ENCODE measurements at regions of chr7 and their contacts with region 1.

Region 1: GRCh38 chr7:876167-876967 is at the start of gene GET4:
- DNase-seq: peak; percentile 98 to 99 (median 98)
- ATAC-seq: peak; percentile 83 to 86
- H3K4me3 ChIP-seq: peak within 1 kb of the TSS; percentile 87
- H3K27ac ChIP-seq: peak within 1 kb of the TSS; percentile 81
- H3K4me1 ChIP-seq: peaks cover 7% of the 10 kb centered on the region
- H3K27me3 ChIP-seq: no peaks in the 10 kb centered on the region
- total RNA-seq, gene GET4: 20.1 to 23.6 (median 22.2) TPM

Region 2: GRCh38 chr7:322111-322671 is 554.2 kb before region 1 on chr7:
- intact Hi-C with region 1: loop called in 1 of 4 experiments (anchors 10 kb)
- DNase-seq: peak; percentile 60 to 89 (median 88)
- ATAC-seq: peak; percentile 82 to 88
- H3K4me3 ChIP-seq: no peak overlapping the region
- H3K27ac ChIP-seq: no peak overlapping the region
- H3K4me1 ChIP-seq: no peaks in the 10 kb centered on the region
- H3K27me3 ChIP-seq: no peaks in the 10 kb centered on the region

Region 3: DNA sequence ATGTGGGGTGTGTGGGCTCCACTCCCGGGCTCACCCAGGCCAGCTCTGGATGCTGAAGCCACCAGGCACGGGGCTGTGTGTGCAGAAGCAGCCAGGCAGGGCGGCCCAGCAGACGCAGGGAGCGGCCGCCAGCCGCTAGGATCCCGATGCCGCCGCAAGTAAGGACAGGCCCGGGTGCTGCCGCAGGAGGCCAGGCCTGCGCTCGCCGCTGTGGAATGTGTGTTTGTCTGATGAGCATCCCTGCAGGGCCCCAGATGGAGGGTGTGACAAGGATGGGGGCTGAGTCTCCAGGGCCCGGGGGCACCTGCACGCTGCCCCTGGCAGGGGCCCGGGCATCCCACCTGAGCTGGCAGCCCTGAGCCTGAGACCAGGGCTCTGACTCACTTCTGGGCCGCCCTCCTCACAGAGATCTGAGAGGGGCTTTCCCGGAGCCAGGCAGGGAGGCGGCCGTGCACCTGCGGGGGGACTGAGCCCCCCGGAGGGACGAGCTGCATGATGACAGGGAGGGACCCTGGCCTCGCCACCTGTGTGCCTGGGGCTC is 484.9 kb before region 1 on chr7:
- intact Hi-C with region 1: no loop called
- DNase-seq: peak in 1 of 3 donors; percentile 48
- ATAC-seq: peak; percentile 14 to 35
- H3K4me3 ChIP-seq: no peak overlapping the region
- H3K27ac ChIP-seq: no peak overlapping the region
- H3K4me1 ChIP-seq: no peaks in the 10 kb centered on the region
- H3K27me3 ChIP-seq: no peaks in the 10 kb centered on the region

Region 4: DNA sequence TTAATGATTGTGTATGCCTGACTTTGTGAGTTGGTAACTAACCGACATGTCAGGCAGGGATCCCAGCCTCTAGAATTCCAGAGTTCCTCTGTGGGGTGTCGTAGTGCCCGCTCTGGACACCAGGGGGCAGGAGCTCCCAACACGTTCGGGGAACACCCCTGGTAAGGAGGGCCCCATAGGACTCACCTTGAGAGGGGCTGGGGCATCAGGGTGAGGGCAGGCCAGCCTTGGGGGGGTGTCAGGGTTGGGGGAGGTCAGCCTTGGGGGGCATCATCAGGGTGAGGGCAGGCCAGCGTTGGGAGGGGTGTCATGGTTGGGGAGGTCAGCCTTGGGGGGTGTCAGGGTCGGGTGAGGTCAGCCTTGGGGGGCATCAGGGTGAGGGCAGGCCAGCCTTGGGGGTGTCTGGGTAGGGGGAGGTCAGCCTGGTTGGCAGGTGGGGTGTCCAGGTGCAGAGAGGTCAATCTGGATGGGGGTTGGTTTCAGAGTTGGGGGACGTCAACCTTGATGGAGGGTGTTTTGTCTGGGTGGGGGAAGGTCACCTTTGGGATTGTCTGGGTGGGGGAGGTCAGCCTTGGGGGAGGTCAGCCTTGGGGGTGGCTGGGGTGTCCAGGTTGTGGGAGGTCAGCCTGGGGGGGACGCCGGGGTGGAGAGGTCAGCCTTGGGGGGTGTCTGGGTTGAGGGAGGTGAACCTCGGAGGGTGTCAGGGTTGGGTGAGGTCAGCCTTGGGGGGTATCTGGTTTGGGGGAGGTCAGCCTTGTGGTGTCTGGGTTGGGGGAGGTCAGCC is 89.7 kb before region 1 on chr7:
- intact Hi-C with region 1: loop called (anchors 5 to 10 kb)
- DNase-seq: peak; percentile 74 to 91 (median 91)
- ATAC-seq: peak; percentile 71 to 84
- H3K4me3 ChIP-seq: no peak overlapping the region
- H3K27ac ChIP-seq: no peak overlapping the region
- H3K4me1 ChIP-seq: no peaks in the 10 kb centered on the region
- H3K27me3 ChIP-seq: no peaks in the 10 kb centered on the region

Region 5: DNA sequence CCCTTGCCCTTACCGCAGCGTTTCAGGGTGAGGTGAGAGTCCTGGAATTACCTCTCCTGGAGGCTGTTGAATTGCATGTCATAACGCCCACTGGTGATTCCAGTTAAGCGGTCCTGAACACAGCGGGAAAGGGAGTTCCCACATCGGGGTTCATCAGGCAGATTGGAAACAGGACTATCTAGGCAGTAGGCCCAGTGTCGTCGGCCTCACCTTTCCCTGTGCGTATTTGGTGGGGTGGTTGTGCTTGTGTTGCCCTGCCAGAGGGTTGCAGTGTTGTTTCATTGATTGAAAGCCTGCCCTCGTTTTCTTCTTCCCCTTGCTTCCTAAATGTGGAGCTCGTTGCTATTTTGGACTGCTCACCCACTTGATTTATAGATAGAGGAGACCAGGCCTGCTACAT is 54.7 kb before region 1 on chr7:
- intact Hi-C with region 1: loop called in 3 of 4 experiments (anchors 5 to 10 kb)
- DNase-seq: peak in 2 of 3 donors; percentile 28 to 37
- ATAC-seq: peak; percentile 49 to 52
- H3K4me3 ChIP-seq: no peak overlapping the region
- H3K27ac ChIP-seq: peak overlapping the region; percentile 66
- H3K4me1 ChIP-seq: peaks cover 23% of the 10 kb centered on the region
- H3K27me3 ChIP-seq: no peaks in the 10 kb centered on the region

Region 6: GRCh38 chr7:836411-837400 is 39.7 kb before region 1 on chr7:
- intact Hi-C with region 1: loop called in 2 of 4 experiments (anchors 5 kb)
- DNase-seq: peak in 1 of 3 donors; percentile 71
- ATAC-seq: peak; percentile 40 to 53
- H3K4me3 ChIP-seq: no peak overlapping the region
- H3K27ac ChIP-seq: peak overlapping the region; percentile 75
- H3K4me1 ChIP-seq: peaks cover 16% of the 10 kb centered on the region
- H3K27me3 ChIP-seq: no peaks in the 10 kb centered on the region